ENCODE measurements at regions of chr12 and their contacts with region 1.

Region 1: GRCh38 chr12:127293507-127294310 is 973.3 kb upstream of the TMEM132C start:
- DNase-seq: no peak
- H3K4me3 ChIP-seq: no peak overlapping the region
- H3K27me3 ChIP-seq: no peaks in the 10 kb centered on the region
- CTCF ChIP-seq: peak; percentile 96

Region 2: DNA sequence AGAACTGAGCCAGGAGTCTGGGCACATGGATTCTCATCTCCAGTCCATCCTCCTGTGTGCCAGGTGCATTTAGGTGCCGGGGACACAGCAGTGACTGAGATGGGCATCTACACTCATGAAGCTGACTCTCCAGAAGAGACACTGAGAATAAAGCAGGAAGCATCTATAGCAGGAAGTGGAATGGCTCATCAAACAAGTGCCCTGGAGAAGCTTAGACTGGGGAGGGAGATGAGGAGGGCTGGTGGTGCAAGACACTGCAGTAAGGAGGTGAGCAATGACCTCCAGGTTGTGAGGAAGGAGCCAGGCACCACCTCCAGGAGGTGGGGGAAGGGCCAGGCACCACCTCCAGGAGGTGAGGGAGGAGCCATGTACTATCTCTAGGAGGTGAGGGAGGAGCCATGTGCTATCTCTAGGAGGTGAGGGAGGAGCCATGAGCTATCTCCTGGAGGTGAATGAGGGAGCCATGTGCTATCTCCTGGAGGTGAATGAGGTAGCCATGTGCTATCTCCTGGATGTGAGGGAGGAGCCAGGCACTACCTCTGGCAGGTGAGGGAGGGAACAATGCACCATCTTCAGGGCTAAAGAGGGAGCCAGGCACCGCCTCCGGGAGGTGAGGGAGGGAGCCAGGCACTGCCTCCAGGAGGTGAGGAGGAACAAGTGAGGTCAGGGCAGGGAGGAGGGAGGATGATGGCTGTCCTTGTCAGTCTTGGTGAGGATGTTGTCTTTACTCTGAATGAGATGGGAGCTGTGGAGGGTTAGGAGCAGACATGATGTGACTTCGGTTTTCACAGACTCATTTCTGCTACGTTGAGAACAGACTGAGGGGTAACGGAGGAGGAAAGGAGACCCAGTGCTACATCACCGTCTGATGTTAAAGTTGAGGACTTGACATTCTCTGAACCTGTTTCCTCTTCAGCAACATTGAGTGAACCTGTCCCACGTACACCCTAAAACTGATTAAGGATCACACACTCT is 11.3 kb after region 1 on chr12:
- CTCF ChIA-PET with region 1: interaction called, 20 read pairs
- POLR2A ChIA-PET with region 1: no interaction called
- DNase-seq: no peak
- H3K4me3 ChIP-seq: no peak overlapping the region
- H3K27me3 ChIP-seq: no peaks in the 10 kb centered on the region; the same call in 1 of the 2 replicates
- CTCF ChIP-seq: no peak

Region 3: DNA sequence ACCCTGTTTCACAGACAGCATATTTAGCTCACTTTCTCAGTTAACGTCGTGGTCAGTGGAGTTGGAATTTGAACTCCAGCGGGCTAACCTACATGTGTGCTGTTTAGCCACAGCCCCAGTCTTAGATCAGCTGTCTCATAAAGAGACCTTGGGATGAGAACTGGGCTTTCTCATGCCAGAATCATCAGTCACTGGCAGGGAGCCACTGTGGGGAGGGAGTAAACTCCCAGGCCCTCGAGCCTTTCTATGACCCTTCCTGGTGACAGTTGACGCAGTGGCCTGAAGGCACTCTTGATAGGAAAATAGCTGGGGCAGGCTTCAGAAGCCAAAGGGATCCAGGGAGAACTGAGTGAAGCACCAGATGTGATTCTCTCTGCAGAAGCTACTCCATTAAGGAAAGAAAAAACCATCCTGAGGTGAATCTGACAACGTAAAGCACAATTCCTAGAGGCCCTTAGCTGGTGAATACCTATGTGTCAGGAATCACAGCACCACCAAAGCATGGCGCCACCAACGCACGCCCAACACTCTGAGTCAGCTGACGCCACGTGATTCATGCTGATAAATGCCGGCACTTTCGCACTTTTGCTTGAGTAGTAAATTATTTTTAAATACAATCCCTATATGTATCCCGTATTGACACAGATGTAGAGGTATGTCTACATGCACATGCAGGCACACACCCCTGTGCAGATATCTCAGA is 693.6 kb after region 1 on chr12:
- CTCF ChIA-PET with region 1: no interaction called
- POLR2A ChIA-PET with region 1: no interaction called
- DNase-seq: peak; percentile 65
- H3K4me3 ChIP-seq: no peak overlapping the region
- H3K27me3 ChIP-seq: no peaks in the 10 kb centered on the region
- CTCF ChIP-seq: no peak

Measured in BJ (cell line).